GM10248 (cell line): ENCODE measurements at regions of chr1 and their contacts with region 1.

Region 1: GRCh38 chr1:206814716-206815341 is 42.5 kb upstream of the IL10 start:
- DNase-seq: no peak
- CTCF ChIP-seq: no peak

Region 2: GRCh38 chr1:206834711-206835110 is 19.9 kb after region 1 on chr1:
- CTCF ChIA-PET with region 1: interaction called, 40 read pairs
- POLR2A ChIA-PET with region 1: no interaction called
- DNase-seq: no peak
- CTCF ChIP-seq: no peak